Right cardiac atrium (tissue), 5 donors: ENCODE measurements at regions of chr12 and their contacts with region 1.

Region 1: DNA sequence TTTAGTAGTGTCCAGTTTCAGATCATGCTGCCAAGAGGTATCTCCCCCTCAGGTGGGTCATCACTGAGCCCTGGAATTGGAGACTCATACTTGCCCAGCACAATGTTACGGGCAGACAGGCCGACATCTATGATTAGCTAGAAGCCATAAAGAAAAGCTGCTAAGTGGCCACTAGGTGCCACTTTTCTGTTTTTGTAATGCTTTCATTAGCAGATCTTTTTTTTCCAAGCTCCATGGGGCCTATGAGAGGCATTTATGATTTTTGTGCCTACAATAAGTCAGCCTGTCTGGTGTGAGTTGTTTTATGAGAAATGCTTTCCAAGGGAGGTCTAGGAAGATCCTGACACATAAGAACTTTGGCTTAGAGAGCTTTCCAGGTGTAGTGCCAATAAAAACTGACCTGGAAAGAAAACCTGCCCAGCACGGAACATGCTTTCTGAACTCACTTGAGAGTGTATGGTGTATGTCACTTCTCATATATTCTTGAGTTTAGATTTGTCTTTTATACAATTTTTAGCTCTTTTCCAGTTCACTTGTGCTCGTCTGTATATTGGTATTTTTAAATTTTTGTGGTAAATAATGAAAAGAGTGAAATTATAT is 21.8 kb upstream of the SMCO2 start:
- DNase-seq: no peak
- ATAC-seq: peak; percentile 79 to 89
- H3K4me3 ChIP-seq: no peak overlapping the region
- H3K27ac ChIP-seq: no peak overlapping the region
- H3K4me1 ChIP-seq: no peaks in the 10 kb centered on the region
- H3K27me3 ChIP-seq: no peaks in the 10 kb centered on the region

Region 2: DNA sequence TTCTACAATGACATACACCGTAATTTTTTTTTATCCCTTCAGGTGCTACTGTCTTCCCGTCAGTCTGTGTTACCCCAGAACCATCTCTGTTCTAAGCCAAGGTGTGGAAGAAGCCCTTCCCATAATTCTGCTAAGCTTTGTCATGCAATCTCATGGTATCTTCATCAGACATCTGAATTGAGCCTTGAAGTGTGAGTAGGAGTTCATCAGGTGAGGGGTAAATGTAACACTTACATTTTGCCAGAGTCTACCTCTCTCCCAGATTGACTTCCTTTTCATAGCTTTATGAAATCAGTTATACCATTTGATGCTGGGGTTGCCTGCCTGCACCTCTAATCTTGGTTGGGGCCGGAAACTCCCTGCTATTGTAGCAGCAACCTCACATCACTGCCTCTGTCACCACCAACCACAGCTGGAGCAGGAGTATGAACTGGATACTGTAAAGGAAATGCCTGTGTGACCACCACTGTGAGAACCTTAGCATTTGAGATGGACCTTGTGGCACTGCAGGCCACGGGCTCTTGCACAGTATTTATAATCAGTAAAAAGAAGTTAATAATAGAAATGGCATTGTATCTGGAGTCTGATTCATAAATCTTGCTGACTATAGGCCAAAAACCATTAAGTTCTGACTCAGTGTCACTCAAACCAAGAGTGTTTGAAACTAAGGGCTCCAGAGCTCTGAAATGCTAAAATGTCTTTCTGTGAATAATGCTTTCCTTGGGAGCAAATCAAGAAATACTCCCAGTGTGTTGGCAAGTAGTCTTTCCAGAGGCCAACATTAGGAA is 239.3 kb before region 1 on chr12:
- intact Hi-C with region 1: no loop called
- DNase-seq: peak in 1 of 3 donors; percentile 36
- ATAC-seq: peak; percentile 57 to 72
- H3K4me3 ChIP-seq: no peak overlapping the region
- H3K27ac ChIP-seq: peak overlapping the region; percentile 57
- H3K4me1 ChIP-seq: peaks cover 8% of the 10 kb centered on the region
- H3K27me3 ChIP-seq: no peaks in the 10 kb centered on the region

Region 3: GRCh38 chr12:27207615-27208413 is 216.9 kb before region 1 on chr12:
- intact Hi-C with region 1: no loop called
- DNase-seq: no peak
- ATAC-seq: no peak
- H3K4me3 ChIP-seq: no peak overlapping the region
- H3K27ac ChIP-seq: no peak overlapping the region
- H3K4me1 ChIP-seq: no peaks in the 10 kb centered on the region
- H3K27me3 ChIP-seq: no peaks in the 10 kb centered on the region

Region 4: DNA sequence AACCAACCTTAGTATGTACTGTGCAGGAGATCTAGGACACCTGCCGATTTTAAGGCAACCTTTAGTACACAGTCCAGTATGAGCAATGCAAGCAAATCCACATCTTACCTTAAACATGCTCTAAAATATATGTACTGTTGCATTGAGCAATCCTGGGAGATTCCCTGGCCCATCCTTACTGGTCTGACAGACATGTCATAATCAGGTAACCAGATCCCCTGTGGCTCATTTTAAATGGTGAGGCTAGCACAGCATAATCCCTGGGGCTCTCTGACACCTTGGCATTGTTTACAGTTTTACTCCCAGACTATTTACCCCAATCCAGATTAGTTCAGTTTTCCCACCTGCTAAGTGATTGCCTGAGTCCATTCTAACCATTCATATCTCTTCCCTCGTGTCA is 77.0 kb before region 1 on chr12:
- intact Hi-C with region 1: no loop called
- DNase-seq: no peak
- ATAC-seq: no peak
- H3K4me3 ChIP-seq: no peak overlapping the region
- H3K27ac ChIP-seq: no peak overlapping the region
- H3K4me1 ChIP-seq: no peaks in the 10 kb centered on the region
- H3K27me3 ChIP-seq: no peaks in the 10 kb centered on the region

Region 5: GRCh38 chr12:27652174-27652763 is 227.5 kb after region 1 on chr12:
- intact Hi-C with region 1: loop called in 1 of 4 experiments (anchors 10 kb)
- DNase-seq: no peak
- ATAC-seq: peak; percentile 71 to 86
- H3K4me3 ChIP-seq: no peak overlapping the region
- H3K27ac ChIP-seq: no peak overlapping the region
- H3K4me1 ChIP-seq: no peaks in the 10 kb centered on the region
- H3K27me3 ChIP-seq: no peaks in the 10 kb centered on the region